Spleen (tissue), 13 donors: ENCODE measurements at regions of chr14 and their contacts with region 1.

Region 1: DNA sequence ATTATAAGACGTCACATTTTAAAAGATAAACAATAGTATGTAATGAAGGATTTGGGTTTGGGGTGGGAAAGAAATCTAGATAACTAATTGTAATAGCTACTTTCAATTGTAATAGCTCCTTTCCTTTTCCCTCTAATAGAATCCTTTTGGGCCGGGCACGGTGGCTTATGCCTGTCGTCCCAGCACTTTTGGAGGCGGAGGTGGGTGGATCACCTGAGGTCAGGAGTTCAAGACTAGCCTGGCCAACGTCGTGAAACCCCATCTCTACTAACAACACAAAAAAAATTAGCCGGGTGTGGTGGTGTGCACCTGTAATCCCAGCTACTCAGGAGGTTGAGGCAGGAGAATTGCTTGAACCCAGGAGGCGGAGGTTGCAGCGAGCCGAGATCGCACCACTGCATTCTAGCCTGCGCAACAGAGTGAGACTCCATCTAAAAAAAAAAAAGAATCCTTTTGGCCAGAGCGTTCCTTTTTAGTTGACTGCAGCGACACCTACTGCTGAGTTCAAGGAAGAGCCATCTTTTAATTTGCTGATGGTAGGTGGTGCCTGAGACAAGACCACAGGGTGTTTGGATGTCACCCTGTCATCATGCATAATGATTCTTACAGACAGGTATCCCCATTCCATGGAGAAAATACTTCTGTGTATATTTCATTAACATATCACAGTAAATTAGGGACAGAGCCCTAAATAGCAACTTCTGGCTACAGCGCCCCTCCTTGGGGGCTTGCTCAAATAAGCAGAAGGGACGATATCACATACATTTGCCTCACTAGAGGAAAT is 79.5 kb downstream of the ARMH4 start:
- DNase-seq: no peak
- H3K4me3 ChIP-seq: peak overlapping the region in 1 of 8 donors; percentile 14
- H3K27ac ChIP-seq: no peak overlapping the region
- H3K4me1 ChIP-seq: peaks cover 0 to 7% (median 4%) of the 10 kb centered on the region in 6 donors
- H3K27me3 ChIP-seq: no peaks in the 10 kb centered on the region
- CTCF ChIP-seq: peak in 9 of 11 experiments; percentile 22 to 71 (median 65)
- POLR2A ChIP-seq: no peak

Region 2: DNA sequence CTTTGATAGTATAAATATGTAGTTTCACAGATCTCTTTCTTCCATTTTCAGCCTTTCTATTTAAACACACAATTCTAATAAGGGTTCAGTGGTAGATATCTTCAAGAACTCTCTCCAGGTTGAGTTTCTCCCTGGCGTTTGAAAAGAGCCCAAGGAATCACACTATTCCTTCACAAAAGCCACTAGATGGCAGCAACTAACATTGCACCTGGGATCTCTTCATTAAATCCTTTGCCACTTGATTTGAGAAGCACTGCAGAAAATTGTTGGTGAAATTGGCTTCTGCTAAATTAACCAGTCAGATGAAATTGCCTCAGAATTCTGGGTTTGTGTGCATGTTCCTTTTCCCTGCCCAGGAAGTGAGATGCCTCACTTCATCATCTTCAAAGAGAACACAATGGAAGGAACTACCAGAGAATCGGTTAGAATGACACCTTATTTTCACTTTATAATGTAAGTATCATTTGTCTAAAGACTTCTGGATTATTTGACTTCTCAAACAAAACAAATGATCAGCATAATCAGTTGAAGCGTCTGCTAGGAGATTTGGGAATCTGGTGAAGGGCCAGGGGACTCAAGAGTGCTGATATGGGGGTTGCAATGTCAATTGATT is 585.6 kb before region 1 on chr14:
- intact Hi-C with region 1: loop called (anchors 5 kb)
- DNase-seq: no peak
- H3K4me3 ChIP-seq: no peak overlapping the region
- H3K27ac ChIP-seq: no peak overlapping the region
- H3K4me1 ChIP-seq: peaks cover 0 to 26% (median 11%) of the 10 kb centered on the region in 6 donors
- H3K27me3 ChIP-seq: no peaks in the 10 kb centered on the region
- CTCF ChIP-seq: peak in 8 of 11 experiments; percentile 17 to 54 (median 42)
- POLR2A ChIP-seq: no peak

Region 3: GRCh38 chr14:58258156-58258555 is 185.7 kb after region 1 on chr14:
- intact Hi-C with region 1: no loop called
- DNase-seq: no peak
- H3K4me3 ChIP-seq: no peak overlapping the region
- H3K27ac ChIP-seq: no peak overlapping the region
- H3K4me1 ChIP-seq: peaks cover 0 to 9% (median 3%) of the 10 kb centered on the region in 6 donors
- H3K27me3 ChIP-seq: no peaks in the 10 kb centered on the region
- CTCF ChIP-seq: no peak
- POLR2A ChIP-seq: no peak